Activated B cell treated with CpG ODN at 0.5 μM for 24 hours (primary cell): ENCODE measurements at regions of chr11 and their contacts with region 1.

Region 1: DNA sequence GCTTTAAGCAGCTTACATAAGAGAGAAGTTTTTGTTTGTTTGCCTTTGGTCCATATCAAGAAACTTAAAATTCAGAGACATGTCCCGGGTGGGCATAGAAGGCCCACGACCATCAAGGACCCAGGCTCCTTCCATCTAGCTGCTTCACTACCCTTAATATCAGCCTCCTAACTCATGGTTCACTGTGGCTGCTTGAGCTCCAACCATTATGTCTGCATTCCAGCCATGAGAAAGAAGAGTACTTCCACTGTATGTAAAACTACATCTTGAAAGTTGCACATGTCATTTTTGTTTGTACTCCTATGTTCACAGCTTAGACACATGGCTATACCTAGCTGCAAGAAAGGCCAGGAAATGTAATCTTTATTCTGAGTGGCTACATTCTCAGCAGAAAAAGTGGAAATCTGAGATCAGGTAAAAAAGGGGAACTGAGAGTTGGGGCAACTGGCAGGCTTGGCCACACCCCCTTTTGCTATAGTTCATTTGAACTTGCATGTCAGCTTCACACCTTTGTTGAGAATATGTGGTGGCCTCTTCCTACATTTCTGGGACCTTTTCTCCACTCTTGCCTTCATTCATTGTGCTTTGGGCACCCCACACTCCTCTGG is 81.3 kb upstream of the TP53I11 start:
- DNase-seq: no peak
- ATAC-seq: peak; percentile 40
- H3K4me3 Mint-ChIP-seq: peak overlapping the region; percentile 55
- H3K27ac Mint-ChIP-seq: peak overlapping the region; percentile 81
- H3K4me1 Mint-ChIP-seq: peaks cover 64% of the 10 kb centered on the region
- H3K27me3 Mint-ChIP-seq: no peaks in the 10 kb centered on the region
- CTCF ChIP-seq: no peak

Region 2: DNA sequence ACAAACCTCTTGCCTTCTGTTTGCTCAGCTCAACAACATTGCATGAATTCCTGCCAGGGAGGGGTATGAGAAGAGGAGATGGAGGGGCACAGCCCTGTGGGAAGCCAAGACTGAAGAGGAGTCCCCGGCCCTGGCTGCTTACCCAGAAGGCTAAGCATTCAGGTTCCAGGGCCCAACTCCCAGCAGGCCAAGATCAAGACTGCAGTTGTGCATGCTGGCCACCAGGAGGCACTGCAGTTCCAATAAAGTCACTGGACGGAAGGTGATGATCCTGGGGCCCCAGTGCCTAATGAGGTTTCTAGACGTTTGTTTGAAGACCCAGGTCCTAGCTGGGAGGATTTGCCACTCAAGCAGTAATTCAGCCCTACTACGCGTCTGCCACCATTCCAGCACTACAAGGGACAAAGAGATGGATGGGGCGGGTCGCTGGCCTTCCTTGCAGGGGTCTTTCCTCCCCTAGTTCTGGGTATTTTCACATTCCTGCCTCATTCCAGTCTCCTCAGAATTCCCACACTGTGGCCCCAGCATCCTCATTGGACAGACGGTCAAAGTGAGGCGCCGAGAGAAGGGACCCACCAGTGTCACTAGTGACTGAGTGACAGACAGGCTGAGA is 745.6 kb before region 1 on chr11:
- CTCF ChIA-PET with region 1: no interaction called
- POLR2A ChIA-PET with region 1: no interaction called
- intact Hi-C with region 1: no loop called
- DNase-seq: peak; percentile 55
- ATAC-seq: peak; percentile 79
- H3K4me3 Mint-ChIP-seq: no peak overlapping the region
- H3K27ac Mint-ChIP-seq: peak overlapping the region; percentile 16
- H3K4me1 Mint-ChIP-seq: no peaks in the 10 kb centered on the region
- H3K27me3 Mint-ChIP-seq: peaks cover 16% of the 10 kb centered on the region
- CTCF ChIP-seq: peak; percentile 44

Region 3: GRCh38 chr11:44611687-44612434 is 420.2 kb before region 1 on chr11:
- CTCF ChIA-PET with region 1: no interaction called
- POLR2A ChIA-PET with region 1: interaction called, 15 read pairs
- intact Hi-C with region 1: loop called (anchors 1 kb)
- DNase-seq: peak; percentile 67
- ATAC-seq: peak; percentile 44
- H3K4me3 Mint-ChIP-seq: peak overlapping the region; percentile 26
- H3K27ac Mint-ChIP-seq: peak overlapping the region; percentile 97
- H3K4me1 Mint-ChIP-seq: peaks cover 100% of the 10 kb centered on the region
- H3K27me3 Mint-ChIP-seq: no peaks in the 10 kb centered on the region
- CTCF ChIP-seq: no peak

Region 4: DNA sequence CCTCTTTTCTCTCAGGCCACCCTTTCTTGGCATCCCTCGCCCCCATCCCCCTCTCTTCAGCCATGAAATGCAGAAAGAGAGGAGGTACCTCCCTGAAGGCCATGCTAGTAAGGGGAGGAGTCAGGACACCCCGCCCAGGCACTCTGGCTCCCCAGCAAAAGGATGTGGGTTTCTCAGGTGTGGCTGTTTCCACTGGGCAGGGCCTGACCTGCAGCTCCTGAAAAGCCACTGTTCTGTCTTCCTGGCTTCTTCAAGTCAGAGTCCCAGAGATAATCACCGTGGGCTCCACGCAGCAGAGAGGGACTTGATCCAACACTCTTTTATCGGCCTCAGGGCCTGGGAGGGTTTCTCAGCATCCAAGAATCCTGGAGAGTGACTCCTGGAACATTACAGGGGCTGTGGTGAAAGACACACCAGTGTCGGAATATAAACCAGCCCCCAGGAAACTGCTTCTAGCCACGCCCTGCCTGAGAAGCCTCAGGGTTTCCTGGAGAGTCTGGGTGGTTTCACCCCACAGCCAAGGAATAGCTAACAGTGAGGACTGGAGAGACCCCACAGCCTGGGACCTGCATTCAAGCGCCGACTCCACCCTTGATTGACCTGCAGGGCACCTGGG is 350.9 kb before region 1 on chr11:
- CTCF ChIA-PET with region 1: no interaction called
- POLR2A ChIA-PET with region 1: no interaction called
- intact Hi-C with region 1: no loop called
- DNase-seq: no peak
- ATAC-seq: no peak
- H3K4me3 Mint-ChIP-seq: no peak overlapping the region
- H3K27ac Mint-ChIP-seq: no peak overlapping the region
- H3K4me1 Mint-ChIP-seq: peaks cover 6% of the 10 kb centered on the region
- H3K27me3 Mint-ChIP-seq: peaks cover 7% of the 10 kb centered on the region
- CTCF ChIP-seq: no peak

Region 5: DNA sequence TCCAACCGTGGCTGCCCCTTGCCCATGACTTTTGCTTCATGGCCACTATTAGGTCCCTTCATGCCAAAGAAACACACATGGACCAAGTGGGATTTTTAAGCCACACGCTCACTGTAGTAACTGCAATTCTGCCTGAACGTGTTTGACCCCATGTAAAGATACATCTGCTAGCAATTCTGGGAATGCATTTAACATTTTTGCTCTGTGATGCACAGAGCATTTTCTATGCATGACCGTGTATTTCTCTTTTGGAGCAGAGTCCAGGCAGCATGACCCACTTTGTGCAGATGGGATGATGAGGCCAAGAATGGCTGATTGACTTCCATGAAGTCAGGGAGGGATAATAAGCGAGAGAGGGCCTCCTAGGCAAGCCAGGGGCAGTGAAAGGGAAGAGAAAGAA is 189.8 kb before region 1 on chr11:
- CTCF ChIA-PET with region 1: no interaction called
- POLR2A ChIA-PET with region 1: no interaction called
- intact Hi-C with region 1: no loop called
- DNase-seq: no peak
- ATAC-seq: no peak
- H3K4me3 Mint-ChIP-seq: no peak overlapping the region
- H3K27ac Mint-ChIP-seq: no peak overlapping the region
- H3K4me1 Mint-ChIP-seq: no peaks in the 10 kb centered on the region
- H3K27me3 Mint-ChIP-seq: no peaks in the 10 kb centered on the region
- CTCF ChIP-seq: no peak

Region 6: GRCh38 chr11:44943118-44943517 is 88.9 kb before region 1 on chr11:
- CTCF ChIA-PET with region 1: interaction called, 5 read pairs
- POLR2A ChIA-PET with region 1: interaction called, 17 read pairs
- intact Hi-C with region 1: loop called (anchors 1 kb)
- DNase-seq: peak; percentile 74
- ATAC-seq: peak; percentile 94
- H3K4me3 Mint-ChIP-seq: peak overlapping the region; percentile 76
- H3K27ac Mint-ChIP-seq: peak overlapping the region; percentile 80
- H3K4me1 Mint-ChIP-seq: peaks cover 92% of the 10 kb centered on the region
- H3K27me3 Mint-ChIP-seq: no peaks in the 10 kb centered on the region
- CTCF ChIP-seq: no peak

Region 7: GRCh38 chr11:45057938-45058646 is 26.1 kb after region 1 on chr11:
- CTCF ChIA-PET with region 1: no interaction called
- POLR2A ChIA-PET with region 1: no interaction called
- intact Hi-C with region 1: loop called (anchors 1 kb)
- DNase-seq: no peak
- ATAC-seq: no peak
- H3K4me3 Mint-ChIP-seq: no peak overlapping the region
- H3K27ac Mint-ChIP-seq: no peak overlapping the region
- H3K4me1 Mint-ChIP-seq: peaks cover 15% of the 10 kb centered on the region
- H3K27me3 Mint-ChIP-seq: peaks cover 11% of the 10 kb centered on the region
- CTCF ChIP-seq: no peak

Region 8: GRCh38 chr11:45079943-45080719 is 48.1 kb after region 1 on chr11:
- CTCF ChIA-PET with region 1: interaction called, 14 read pairs
- POLR2A ChIA-PET with region 1: interaction called, 81 read pairs
- intact Hi-C with region 1: loop called (anchors 1 kb)
- DNase-seq: peak; percentile 45
- ATAC-seq: peak; percentile 71
- H3K4me3 Mint-ChIP-seq: peak overlapping the region; percentile 59
- H3K27ac Mint-ChIP-seq: peak overlapping the region; percentile 84
- H3K4me1 Mint-ChIP-seq: peaks cover 71% of the 10 kb centered on the region
- H3K27me3 Mint-ChIP-seq: no peaks in the 10 kb centered on the region
- CTCF ChIP-seq: no peak